ENCODE measurements at regions of chr4 and their contacts with region 1.

Region 1: DNA sequence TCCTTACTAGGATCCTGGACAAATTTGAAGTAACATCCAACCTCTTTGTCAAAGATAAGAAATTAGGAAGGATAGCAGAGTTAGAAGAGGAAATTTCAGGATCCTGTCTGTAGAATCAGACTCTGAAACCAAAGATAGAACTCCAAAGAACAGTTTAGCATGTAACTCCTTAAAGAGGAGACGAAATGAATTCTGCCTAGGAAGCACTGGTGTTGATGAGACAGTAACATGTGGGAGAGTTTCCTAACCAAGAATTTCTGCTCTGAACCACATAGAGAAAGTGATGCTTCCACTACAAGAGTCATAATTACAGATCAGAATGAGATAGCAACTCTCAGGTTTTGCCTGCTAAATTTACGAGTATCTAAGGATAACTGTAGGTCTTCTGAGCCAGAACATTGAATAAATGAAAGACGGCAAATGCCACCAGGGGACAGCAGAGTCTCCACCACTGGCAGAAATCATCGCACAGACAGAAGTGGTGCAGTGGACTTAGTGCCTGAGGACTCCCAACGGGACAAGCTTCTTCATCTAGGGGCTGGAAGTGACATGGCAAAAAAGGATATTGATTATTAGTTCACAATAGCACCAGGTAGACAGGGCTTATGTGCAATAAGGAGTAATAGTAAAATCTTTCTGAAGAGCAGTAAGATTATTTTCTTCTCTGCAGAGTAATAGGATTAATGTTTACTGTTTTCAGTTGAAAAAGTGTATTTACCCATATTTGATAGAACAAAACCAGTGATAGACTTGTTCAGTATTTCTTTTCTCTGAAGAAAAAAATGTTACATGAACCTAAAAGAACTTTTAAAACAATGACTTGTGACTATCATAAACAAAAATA is 6.7 kb upstream of the PPID start:
- DNase-seq: peak in 1 of 2 donors; percentile 82
- H3K4me3 ChIP-seq: no peak overlapping the region
- H3K27ac ChIP-seq: no peak overlapping the region
- H3K4me1 ChIP-seq: no peaks in the 10 kb centered on the region
- H3K27me3 ChIP-seq: no peaks in the 10 kb centered on the region
- CTCF ChIP-seq: peak; percentile 78 to 96 (median 94)

Region 2: DNA sequence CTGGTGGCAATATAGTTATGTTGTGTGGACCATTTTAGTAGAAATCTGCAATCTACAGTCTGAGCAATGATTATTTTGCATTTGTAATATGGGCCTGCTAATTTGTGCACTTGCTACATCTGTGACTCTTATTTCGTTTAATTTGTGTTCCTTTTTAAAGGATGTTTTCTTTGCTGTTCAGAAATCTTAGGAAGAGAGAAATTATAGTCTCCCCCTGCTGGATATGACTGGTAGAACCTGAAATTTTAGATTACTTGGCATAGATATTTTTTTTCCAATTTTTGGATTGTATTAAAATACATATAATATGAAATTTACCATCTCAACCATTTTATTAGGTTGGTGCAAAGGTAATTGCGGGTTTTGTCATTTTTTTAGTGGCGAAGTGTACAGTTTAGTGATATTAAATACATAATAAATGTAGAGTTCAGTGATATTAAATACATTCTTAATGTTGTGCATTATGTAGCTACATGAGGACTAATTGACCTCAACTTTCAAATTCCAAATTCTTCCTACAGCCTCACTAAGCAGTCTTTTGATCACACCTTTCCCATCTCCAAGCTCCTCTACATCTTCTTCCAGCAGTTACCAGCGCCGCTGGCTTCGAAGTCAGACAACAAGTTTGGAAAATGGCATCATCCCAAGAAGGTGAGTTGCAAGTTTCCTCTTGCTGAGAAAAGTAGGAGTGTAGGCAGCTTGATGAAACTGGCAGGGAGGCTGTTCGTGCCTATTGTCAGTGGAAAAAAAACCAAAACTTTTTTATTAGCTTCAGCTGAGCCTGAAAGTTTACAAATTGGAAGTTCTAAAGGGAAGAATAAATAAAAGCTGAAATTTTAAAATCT is 121.1 kb after region 1 on chr4:
- intact Hi-C with region 1: loop called (anchors 1 kb)
- DNase-seq: no peak
- H3K4me3 ChIP-seq: no peak overlapping the region
- H3K27ac ChIP-seq: peak overlapping the region in 1 of 2 donors; percentile 20
- H3K4me1 ChIP-seq: peaks cover 0 to 4% of the 10 kb centered on the region in 2 donors
- H3K27me3 ChIP-seq: no peaks in the 10 kb centered on the region
- CTCF ChIP-seq: peak; percentile 55 to 72 (median 57)

Region 3: GRCh38 chr4:159175085-159175988 is 445.4 kb after region 1 on chr4:
- intact Hi-C with region 1: loop called (anchors 2 kb)
- DNase-seq: peak in 1 of 2 donors; percentile 79
- H3K4me3 ChIP-seq: peak overlapping the region in 1 of 2 donors; percentile 33
- H3K27ac ChIP-seq: peak overlapping the region in 1 of 2 donors; percentile 44
- H3K4me1 ChIP-seq: peaks cover 6 to 30% of the 10 kb centered on the region in 2 donors
- H3K27me3 ChIP-seq: no peaks in the 10 kb centered on the region
- CTCF ChIP-seq: peak; percentile 75 to 86 (median 80)

Region 4: DNA sequence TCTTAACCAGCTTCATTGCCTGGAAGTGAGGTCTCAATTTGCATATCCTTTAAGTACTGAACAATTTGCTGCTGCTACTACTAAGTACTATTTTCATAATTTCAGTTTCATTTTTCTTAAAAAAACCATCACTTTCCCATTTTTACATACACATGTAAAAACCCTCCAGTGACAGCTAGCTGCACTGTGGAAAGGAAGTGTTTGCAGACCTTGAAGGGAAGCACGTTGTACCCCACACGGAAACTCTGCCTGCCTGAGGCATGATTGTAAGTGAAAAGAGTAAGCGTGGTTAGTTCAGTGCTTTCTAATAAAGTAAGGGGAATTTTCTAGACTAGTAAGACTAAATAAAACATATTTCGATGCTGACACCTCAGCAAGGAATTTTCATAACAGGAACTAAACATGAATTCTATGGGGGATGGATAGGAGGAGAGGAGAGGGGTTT is 476.5 kb after region 1 on chr4:
- intact Hi-C with region 1: loop called (anchors 2 kb)
- DNase-seq: no peak
- H3K4me3 ChIP-seq: no peak overlapping the region
- H3K27ac ChIP-seq: peak overlapping the region in 1 of 2 donors; percentile 10
- H3K4me1 ChIP-seq: peaks cover 0 to 15% of the 10 kb centered on the region in 2 donors
- H3K27me3 ChIP-seq: no peaks in the 10 kb centered on the region
- CTCF ChIP-seq: no peak